Activated CD8-positive, alpha-beta memory T cell treated with anti-CD3 and anti-CD28 coated beads, Interleukin-2, amount 10 ng/mL, durations not matched to agents 7 days and 5 days (primary cell): ENCODE measurements at regions of chr1 and their contacts with region 1.

Region 1: GRCh38 chr1:234212764-234213657 is 160.2 kb upstream of the COA6 start:
- DNase-seq: peak; percentile 63
- ATAC-seq: peak; percentile 60
- H3K4me3 Mint-ChIP-seq: peak overlapping the region; percentile 73
- H3K27ac Mint-ChIP-seq: peak overlapping the region; percentile 66
- H3K4me1 Mint-ChIP-seq: peaks cover 39% of the 10 kb centered on the region
- H3K27me3 Mint-ChIP-seq: peaks cover 12% of the 10 kb centered on the region

Region 2: GRCh38 chr1:234188454-234188792 is 24.6 kb before region 1 on chr1:
- CTCF ChIA-PET with region 1: interaction called, 10 read pairs
- DNase-seq: no peak
- ATAC-seq: no peak
- H3K4me3 Mint-ChIP-seq: no peak overlapping the region
- H3K27ac Mint-ChIP-seq: no peak overlapping the region
- H3K4me1 Mint-ChIP-seq: peaks cover 8% of the 10 kb centered on the region
- H3K27me3 Mint-ChIP-seq: peaks cover 64% of the 10 kb centered on the region

Region 3: GRCh38 chr1:234230414-234230862 is 17.4 kb after region 1 on chr1:
- CTCF ChIA-PET with region 1: interaction called, 21 read pairs
- DNase-seq: peak; percentile 72
- ATAC-seq: peak; percentile 81
- H3K4me3 Mint-ChIP-seq: peak overlapping the region; percentile 14
- H3K27ac Mint-ChIP-seq: peak overlapping the region; percentile 57
- H3K4me1 Mint-ChIP-seq: peaks cover 41% of the 10 kb centered on the region
- H3K27me3 Mint-ChIP-seq: peaks cover 35% of the 10 kb centered on the region

Region 4: DNA sequence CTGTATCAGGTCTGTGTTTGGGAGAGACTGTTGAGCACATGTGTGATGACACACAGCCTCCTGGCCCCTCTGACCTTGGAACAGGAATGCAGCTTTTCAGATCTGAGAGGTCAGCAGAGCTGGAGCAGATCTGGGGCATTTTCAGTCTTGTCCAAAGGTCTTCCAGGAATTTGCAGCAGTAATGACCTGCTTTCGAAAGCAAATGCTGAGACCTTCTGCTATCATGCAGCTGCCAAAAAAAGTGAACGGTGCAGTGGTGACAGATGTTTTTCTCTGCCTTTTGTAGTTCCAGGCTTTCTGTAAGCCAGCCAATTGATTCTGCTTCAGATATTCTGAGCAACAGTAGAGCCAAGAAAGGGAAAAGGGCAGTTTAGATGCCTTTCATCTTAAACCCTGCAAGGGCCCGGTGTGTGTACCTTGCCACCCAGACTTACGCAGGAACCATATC is 22.4 kb after region 1 on chr1:
- CTCF ChIA-PET with region 1: interaction called, 11 read pairs
- DNase-seq: peak; percentile 28
- ATAC-seq: no peak
- H3K4me3 Mint-ChIP-seq: no peak overlapping the region
- H3K27ac Mint-ChIP-seq: no peak overlapping the region
- H3K4me1 Mint-ChIP-seq: peaks cover 29% of the 10 kb centered on the region
- H3K27me3 Mint-ChIP-seq: peaks cover 17% of the 10 kb centered on the region

Region 5: DNA sequence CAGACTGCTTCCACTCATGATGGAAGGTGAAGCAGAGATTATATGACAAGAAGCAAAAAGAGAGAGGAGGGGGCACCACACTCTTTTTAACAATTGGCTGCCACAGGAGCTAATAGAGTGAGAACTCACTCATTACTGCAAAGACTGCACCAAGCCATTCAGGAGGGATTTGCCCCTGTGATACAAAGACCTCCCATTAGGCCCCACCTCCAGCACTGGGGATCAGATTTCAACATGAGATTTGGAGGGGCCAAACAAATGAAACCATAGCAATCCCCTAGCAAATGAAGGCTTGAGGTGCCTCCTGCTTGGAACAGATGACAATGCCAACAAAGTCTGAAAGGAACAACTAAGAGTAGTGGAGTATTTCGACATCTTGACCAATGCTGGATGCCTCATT is 37.7 kb after region 1 on chr1:
- CTCF ChIA-PET with region 1: no interaction called
- DNase-seq: no peak
- ATAC-seq: no peak
- H3K4me3 Mint-ChIP-seq: no peak overlapping the region
- H3K27ac Mint-ChIP-seq: no peak overlapping the region
- H3K4me1 Mint-ChIP-seq: peaks cover 26% of the 10 kb centered on the region
- H3K27me3 Mint-ChIP-seq: peaks cover 4% of the 10 kb centered on the region

Region 6: GRCh38 chr1:234326497-234327366 is 113.7 kb after region 1 on chr1:
- CTCF ChIA-PET with region 1: interaction called, 23 read pairs
- DNase-seq: peak; percentile 77
- ATAC-seq: peak; percentile 94
- H3K4me3 Mint-ChIP-seq: peak overlapping the region; percentile 81
- H3K27ac Mint-ChIP-seq: peak overlapping the region; percentile 53
- H3K4me1 Mint-ChIP-seq: peaks cover 21% of the 10 kb centered on the region
- H3K27me3 Mint-ChIP-seq: peaks cover 13% of the 10 kb centered on the region